IMR-90 (cell line): ENCODE measurements at regions of chr6 and their contacts with region 1.

Region 1: GRCh38 chr6:157021344-157021992 is 244.3 kb downstream of the ARID1B start:
- DNase-seq: peak; percentile 81
- ATAC-seq: peak; percentile 78
- H3K4me3 ChIP-seq: peak overlapping the region; percentile 64
- H3K27ac ChIP-seq: peak overlapping the region; percentile 98
- H3K4me1 ChIP-seq: peaks cover 12% of the 10 kb centered on the region
- H3K27me3 ChIP-seq: no peaks in the 10 kb centered on the region
- CTCF ChIP-seq: peak; percentile 52
- POLR2A ChIP-seq: peak; percentile 95
- RAD21 ChIP-seq: peak; percentile 25; the same call in 1 of the 2 replicates

Region 2: DNA sequence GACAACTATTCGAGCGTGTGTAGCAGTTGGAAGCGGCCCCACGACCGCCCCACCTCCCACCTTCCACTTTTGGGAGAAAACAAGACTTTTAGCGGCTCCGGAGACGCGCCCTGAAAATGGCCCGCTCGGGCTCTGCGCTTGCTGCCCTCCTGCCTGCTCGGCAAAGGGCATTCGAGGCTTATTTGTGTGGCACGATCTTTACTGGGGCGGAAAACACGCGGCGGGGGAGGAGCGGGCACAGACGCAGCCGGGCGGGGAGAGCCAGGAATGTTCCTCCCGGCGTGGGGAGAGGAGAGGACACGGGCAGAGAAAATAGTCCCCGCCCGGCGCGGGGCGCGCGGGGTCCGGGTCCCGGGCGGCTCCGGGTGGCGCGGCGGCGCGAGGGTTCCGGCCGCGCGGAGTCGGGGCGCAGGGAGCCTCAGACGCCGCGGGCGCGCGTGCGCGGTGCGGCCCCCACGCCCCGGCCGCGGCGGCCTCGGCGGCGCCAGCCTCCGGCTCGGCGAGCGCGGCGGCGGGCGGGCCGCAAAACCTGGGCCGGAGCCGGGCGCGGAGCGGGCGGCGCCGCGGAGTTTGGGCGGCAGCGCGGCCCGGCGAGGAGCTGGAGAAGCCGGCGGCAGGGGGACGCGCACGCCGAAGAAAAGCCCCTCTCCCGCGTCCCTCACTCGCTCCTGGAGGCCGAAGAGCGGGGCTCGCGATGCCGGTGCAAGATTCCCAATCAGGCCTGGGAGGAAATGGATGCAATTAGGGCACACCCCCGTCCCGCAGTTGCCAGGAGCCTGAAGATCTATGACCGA is 334.3 kb before region 1 on chr6:
- CTCF ChIA-PET with region 1: no interaction called
- POLR2A ChIA-PET with region 1: no interaction called
- dilution Hi-C with region 1: no loop called
- in situ Hi-C with region 1: no loop called
- intact Hi-C with region 1: loop called (anchors 1 kb)
- DNase-seq: peak; percentile 87
- ATAC-seq: peak; percentile 94
- H3K4me3 ChIP-seq: peak overlapping the region; percentile 74
- H3K27ac ChIP-seq: peak overlapping the region; percentile 99
- H3K4me1 ChIP-seq: no peaks in the 10 kb centered on the region
- H3K27me3 ChIP-seq: no peaks in the 10 kb centered on the region
- CTCF ChIP-seq: no peak
- POLR2A ChIP-seq: peak; percentile 77
- RAD21 ChIP-seq: no peak

Region 3: GRCh38 chr6:156992020-156992804 is 29.3 kb before region 1 on chr6:
- CTCF ChIA-PET with region 1: no interaction called
- POLR2A ChIA-PET with region 1: no interaction called
- dilution Hi-C with region 1: no loop called
- in situ Hi-C with region 1: no loop called
- intact Hi-C with region 1: no loop called
- DNase-seq: peak; percentile 71
- ATAC-seq: peak; percentile 75
- H3K4me3 ChIP-seq: no peak overlapping the region
- H3K27ac ChIP-seq: peak overlapping the region; percentile 70
- H3K4me1 ChIP-seq: peaks cover 15% of the 10 kb centered on the region
- H3K27me3 ChIP-seq: no peaks in the 10 kb centered on the region
- CTCF ChIP-seq: no peak
- POLR2A ChIP-seq: no peak
- RAD21 ChIP-seq: no peak